ENCODE measurements at regions of chr7 and their contacts with region 1.

Region 1: DNA sequence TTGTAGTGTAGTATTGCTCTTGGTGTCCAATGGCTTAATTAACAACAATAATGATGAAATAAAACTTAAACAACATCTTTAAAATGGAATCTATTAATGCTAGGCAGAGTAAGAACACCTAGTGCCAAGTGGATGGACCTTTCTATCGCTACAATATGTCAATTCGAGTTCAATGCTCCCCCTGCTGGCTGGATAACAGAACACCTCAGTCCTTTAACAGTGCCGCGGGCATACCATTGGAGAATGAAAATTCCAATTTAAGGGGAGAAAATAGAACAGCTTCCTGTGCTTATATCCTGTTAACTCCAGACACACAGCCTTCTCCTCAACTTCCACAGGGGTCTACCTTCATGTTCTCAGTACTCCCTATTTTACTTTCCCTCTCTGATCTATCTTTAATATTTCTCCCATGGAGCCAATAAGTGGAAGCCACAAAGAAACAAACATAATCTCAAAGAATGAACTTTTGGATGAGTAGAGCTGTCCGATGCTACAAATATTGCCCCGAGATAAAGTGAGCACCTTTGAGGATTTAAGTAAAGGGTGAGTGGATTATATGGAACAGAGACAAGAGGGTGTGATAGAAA is 41.4 kb downstream of the COL1A2 start:
- DNase-seq: peak; percentile 87
- H3K4me3 ChIP-seq: no peak overlapping the region
- H3K27ac ChIP-seq: no peak overlapping the region
- H3K4me1 ChIP-seq: no peaks in the 10 kb centered on the region
- H3K27me3 ChIP-seq: no peaks in the 10 kb centered on the region
- CTCF ChIP-seq: peak; percentile 89

Region 2: GRCh38 chr7:93632371-93632770 is 803.7 kb before region 1 on chr7:
- CTCF ChIA-PET with region 1: interaction called, 14 read pairs
- POLR2A ChIA-PET with region 1: no interaction called
- intact Hi-C with region 1: no loop called
- DNase-seq: no peak
- H3K4me3 ChIP-seq: no peak overlapping the region
- H3K27ac ChIP-seq: no peak overlapping the region
- H3K4me1 ChIP-seq: peaks cover 12% of the 10 kb centered on the region
- H3K27me3 ChIP-seq: no peaks in the 10 kb centered on the region
- CTCF ChIP-seq: no peak

Region 3: DNA sequence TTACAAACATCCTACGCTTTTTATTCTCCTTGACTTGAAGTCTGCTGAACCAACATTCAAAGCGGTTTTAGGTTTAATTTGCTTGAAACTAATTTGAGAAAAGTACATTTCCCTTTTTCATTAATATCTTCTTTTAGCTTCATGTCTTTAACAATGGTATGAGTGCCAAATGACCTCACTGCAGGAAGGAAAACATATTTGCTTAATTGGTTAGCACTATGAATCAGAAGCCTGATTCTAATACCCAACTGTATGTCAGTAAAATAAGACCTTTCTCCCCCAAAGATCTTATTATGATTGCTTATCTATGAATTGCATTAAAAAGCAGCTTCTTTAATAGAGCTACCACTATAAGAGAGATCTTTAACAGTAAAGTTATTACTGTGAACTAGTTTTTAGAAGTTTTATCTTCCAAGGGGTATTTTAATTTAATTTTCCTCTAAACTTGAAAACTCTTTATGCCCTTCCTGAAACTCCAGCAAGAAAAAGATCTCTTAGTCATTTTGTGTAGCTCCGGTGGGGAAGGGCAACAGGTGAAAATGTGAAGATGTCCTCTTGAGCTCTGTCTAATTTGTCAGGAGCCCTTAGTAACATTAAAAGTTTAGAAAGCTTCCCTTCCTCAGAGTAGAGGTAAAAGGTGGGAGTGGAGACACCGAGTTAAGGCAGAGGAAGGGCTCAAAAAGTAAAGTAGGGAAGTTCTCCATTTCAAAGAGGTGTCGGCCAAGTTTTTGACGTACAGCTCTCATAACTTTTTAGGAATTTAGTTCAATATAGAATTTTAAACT is 35.3 kb before region 1 on chr7:
- CTCF ChIA-PET with region 1: no interaction called
- POLR2A ChIA-PET with region 1: interaction called, 3 read pairs
- intact Hi-C with region 1: loop called (anchors 5 kb)
- DNase-seq: peak; percentile 52
- H3K4me3 ChIP-seq: no peak overlapping the region
- H3K27ac ChIP-seq: no peak overlapping the region
- H3K4me1 ChIP-seq: peaks cover 34% of the 10 kb centered on the region
- H3K27me3 ChIP-seq: no peaks in the 10 kb centered on the region
- CTCF ChIP-seq: no peak

Region 4: GRCh38 chr7:94949532-94949931 is 513.4 kb after region 1 on chr7:
- CTCF ChIA-PET with region 1: no interaction called
- POLR2A ChIA-PET with region 1: no interaction called
- intact Hi-C with region 1: no loop called
- DNase-seq: no peak
- H3K4me3 ChIP-seq: no peak overlapping the region
- H3K27ac ChIP-seq: no peak overlapping the region
- H3K4me1 ChIP-seq: no peaks in the 10 kb centered on the region
- H3K27me3 ChIP-seq: no peaks in the 10 kb centered on the region
- CTCF ChIP-seq: no peak

Region 5: GRCh38 chr7:96114190-96114589 is 1678.1 kb after region 1 on chr7:
- CTCF ChIA-PET with region 1: no interaction called
- POLR2A ChIA-PET with region 1: no interaction called
- intact Hi-C with region 1: no loop called
- DNase-seq: no peak
- H3K4me3 ChIP-seq: no peak overlapping the region
- H3K27ac ChIP-seq: no peak overlapping the region
- H3K4me1 ChIP-seq: no peaks in the 10 kb centered on the region
- H3K27me3 ChIP-seq: no peaks in the 10 kb centered on the region
- CTCF ChIP-seq: no peak